ENCODE measurements at regions of chr3 and their contacts with region 1.

Region 1: DNA sequence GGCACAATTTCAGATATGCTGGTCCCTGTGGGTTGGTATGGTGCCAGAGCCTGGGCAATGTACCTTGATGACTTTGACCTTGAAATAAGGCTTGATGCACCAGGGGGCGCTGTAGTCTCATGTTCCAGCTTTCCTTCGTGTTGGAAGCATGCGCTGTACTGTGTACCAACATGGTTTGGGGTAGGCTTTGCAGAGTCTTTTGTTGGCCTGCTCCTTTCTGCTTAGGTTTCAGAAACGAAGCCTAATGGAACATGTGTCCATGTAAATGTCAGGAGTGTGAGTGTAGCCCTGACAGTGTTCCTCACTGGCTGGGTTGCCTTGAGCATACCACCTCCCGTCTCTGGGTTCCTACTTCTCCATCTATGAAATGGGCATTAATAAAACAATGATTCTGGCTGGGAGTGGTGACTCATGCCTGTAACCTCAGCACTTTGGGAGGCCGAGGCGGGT is 3.6 kb upstream of the CCR4 start:
- DNase-seq: peak; percentile 83 to 98 (median 92)
- ATAC-seq: peak; percentile 68
- H3K4me3 ChIP-seq: no peak overlapping the region
- H3K4me3 Mint-ChIP-seq: no peak overlapping the region
- H3K27ac ChIP-seq: no peak overlapping the region
- H3K27ac Mint-ChIP-seq: no peak overlapping the region
- H3K4me1 ChIP-seq: peaks cover 30% of the 10 kb centered on the region
- H3K4me1 Mint-ChIP-seq: peaks cover 47% of the 10 kb centered on the region
- H3K27me3 ChIP-seq: no peaks in the 10 kb centered on the region
- H3K27me3 Mint-ChIP-seq: no peaks in the 10 kb centered on the region
- CTCF ChIP-seq: peak; percentile 85

Region 2: DNA sequence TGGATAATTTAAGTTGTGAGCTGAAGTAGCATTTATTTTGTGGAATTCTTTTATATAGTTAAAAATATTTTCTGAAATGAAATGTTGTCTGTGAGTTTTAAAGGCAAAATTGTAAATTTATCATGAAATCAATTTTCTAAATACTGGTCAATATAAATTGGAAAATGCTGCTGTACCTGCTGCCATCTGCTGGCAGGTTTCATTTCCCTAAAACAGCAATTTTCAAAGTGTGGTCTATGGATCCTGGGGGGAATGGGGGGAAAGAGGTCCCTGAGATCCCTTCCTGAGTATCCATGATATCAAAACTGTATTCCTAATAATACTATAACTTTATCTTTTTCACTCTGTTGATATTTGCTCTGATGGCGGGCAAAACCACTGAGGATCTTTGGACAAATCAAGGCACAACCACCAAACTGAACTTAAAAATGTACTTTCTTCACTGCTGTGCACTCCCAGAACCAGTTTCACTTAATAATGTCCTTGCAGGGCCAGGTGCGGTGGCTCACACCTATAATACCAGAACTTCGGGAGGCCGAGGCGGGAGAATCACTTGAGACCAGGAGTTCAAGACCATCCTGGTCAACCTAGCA is 13.6 kb before region 1 on chr3:
- CTCF ChIA-PET with region 1: no interaction called
- POLR2A ChIA-PET with region 1: no interaction called
- intact Hi-C with region 1: no loop called
- DNase-seq: peak in 4 of 14 experiments; percentile 23 to 51 (median 42)
- ATAC-seq: no peak
- H3K4me3 ChIP-seq: no peak overlapping the region
- H3K4me3 Mint-ChIP-seq: no peak overlapping the region
- H3K27ac ChIP-seq: no peak overlapping the region
- H3K27ac Mint-ChIP-seq: no peak overlapping the region
- H3K4me1 ChIP-seq: no peaks in the 10 kb centered on the region
- H3K4me1 Mint-ChIP-seq: no peaks in the 10 kb centered on the region
- H3K27me3 ChIP-seq: peaks cover 0 to 4% of the 10 kb centered on the region in 2 experiments
- H3K27me3 Mint-ChIP-seq: peaks cover 16% of the 10 kb centered on the region
- CTCF ChIP-seq: peak; percentile 70

Region 3: GRCh38 chr3:32960404-32961170 is 12.8 kb after region 1 on chr3:
- CTCF ChIA-PET with region 1: interaction called, 7 read pairs
- POLR2A ChIA-PET with region 1: interaction called, 3 read pairs
- intact Hi-C with region 1: loop called in 1 of 2 experiments (anchors 1 kb)
- DNase-seq: peak in 3 of 14 experiments; percentile 60 to 71 (median 66)
- ATAC-seq: no peak
- H3K4me3 ChIP-seq: no peak overlapping the region
- H3K4me3 Mint-ChIP-seq: peak overlapping the region; percentile 65
- H3K27ac ChIP-seq: no peak overlapping the region
- H3K27ac Mint-ChIP-seq: peak overlapping the region; percentile 80
- H3K4me1 ChIP-seq: peaks cover 30% of the 10 kb centered on the region
- H3K4me1 Mint-ChIP-seq: peaks cover 35% of the 10 kb centered on the region
- H3K27me3 ChIP-seq: no peaks in the 10 kb centered on the region
- H3K27me3 Mint-ChIP-seq: no peaks in the 10 kb centered on the region
- CTCF ChIP-seq: no peak

Region 4: GRCh38 chr3:33023172-33024136 is 75.6 kb after region 1 on chr3:
- CTCF ChIA-PET with region 1: interaction called, 7 read pairs
- POLR2A ChIA-PET with region 1: no interaction called
- intact Hi-C with region 1: loop called in 1 of 2 experiments (anchors 2 kb)
- DNase-seq: peak in 3 of 14 experiments; percentile 63 to 70 (median 68)
- ATAC-seq: peak; percentile 93
- H3K4me3 ChIP-seq: no peak overlapping the region
- H3K4me3 Mint-ChIP-seq: peak overlapping the region; percentile 56
- H3K27ac ChIP-seq: peak overlapping the region in 1 of 2 donors; percentile 0
- H3K27ac Mint-ChIP-seq: peak overlapping the region; percentile 91
- H3K4me1 ChIP-seq: peaks cover 26% of the 10 kb centered on the region
- H3K4me1 Mint-ChIP-seq: peaks cover 63% of the 10 kb centered on the region
- H3K27me3 ChIP-seq: no peaks in the 10 kb centered on the region
- H3K27me3 Mint-ChIP-seq: no peaks in the 10 kb centered on the region
- CTCF ChIP-seq: peak; percentile 23

Region 5: DNA sequence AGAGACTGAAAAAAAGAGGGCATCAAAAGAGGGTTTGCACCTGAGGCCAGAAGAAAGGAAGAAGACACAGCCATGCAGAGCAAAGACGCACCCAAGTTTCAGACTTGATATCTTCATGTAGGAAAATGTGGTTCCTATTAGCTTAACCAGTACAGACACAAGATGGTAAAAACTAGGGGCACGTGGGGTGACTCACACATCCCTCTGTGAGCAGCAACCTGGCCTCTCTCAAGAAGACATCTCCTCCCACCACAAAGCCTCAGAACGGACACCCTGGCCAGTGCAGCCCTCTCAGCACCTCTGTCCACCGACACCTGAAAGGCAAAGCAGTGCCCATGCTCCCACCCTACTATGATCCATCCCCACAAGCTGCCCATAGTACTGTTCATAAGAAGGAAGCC is 115.8 kb after region 1 on chr3:
- CTCF ChIA-PET with region 1: interaction called, 5 read pairs
- POLR2A ChIA-PET with region 1: interaction called, 5 read pairs
- intact Hi-C with region 1: loop called in 1 of 2 experiments (anchors 2 kb)
- DNase-seq: peak in 11 of 14 experiments; percentile 37 to 70 (median 51)
- ATAC-seq: peak; percentile 41
- H3K4me3 ChIP-seq: no peak overlapping the region
- H3K4me3 Mint-ChIP-seq: peak overlapping the region; percentile 69
- H3K27ac ChIP-seq: peak overlapping the region; percentile 27 to 41
- H3K27ac Mint-ChIP-seq: peak overlapping the region; percentile 94
- H3K4me1 ChIP-seq: peaks cover 63% of the 10 kb centered on the region
- H3K4me1 Mint-ChIP-seq: peaks cover 68% of the 10 kb centered on the region
- H3K27me3 ChIP-seq: no peaks in the 10 kb centered on the region
- H3K27me3 Mint-ChIP-seq: no peaks in the 10 kb centered on the region
- CTCF ChIP-seq: no peak

Region 6: GRCh38 chr3:33131331-33132018 is 183.7 kb after region 1 on chr3:
- CTCF ChIA-PET with region 1: interaction called, 9 read pairs
- POLR2A ChIA-PET with region 1: no interaction called
- intact Hi-C with region 1: loop called in 1 of 2 experiments (anchors 5 kb)
- DNase-seq: peak in 9 of 14 experiments; percentile 5 to 67 (median 18)
- ATAC-seq: peak; percentile 67
- H3K4me3 ChIP-seq: no peak overlapping the region
- H3K4me3 Mint-ChIP-seq: no peak overlapping the region
- H3K27ac ChIP-seq: no peak overlapping the region
- H3K27ac Mint-ChIP-seq: no peak overlapping the region
- H3K4me1 ChIP-seq: no peaks in the 10 kb centered on the region
- H3K4me1 Mint-ChIP-seq: peaks cover 6% of the 10 kb centered on the region
- H3K27me3 ChIP-seq: no peaks in the 10 kb centered on the region
- H3K27me3 Mint-ChIP-seq: no peaks in the 10 kb centered on the region
- CTCF ChIP-seq: peak; percentile 90

Region 7: GRCh38 chr3:33787328-33788009 is 839.7 kb after region 1 on chr3:
- CTCF ChIA-PET with region 1: no interaction called
- POLR2A ChIA-PET with region 1: no interaction called
- intact Hi-C with region 1: loop called in 1 of 2 experiments (anchors 10 kb)
- DNase-seq: peak; percentile 25 to 83 (median 43)
- ATAC-seq: peak; percentile 89
- H3K4me3 ChIP-seq: no peak overlapping the region
- H3K4me3 Mint-ChIP-seq: no peak overlapping the region
- H3K27ac ChIP-seq: no peak overlapping the region
- H3K27ac Mint-ChIP-seq: no peak overlapping the region
- H3K4me1 ChIP-seq: peaks cover 6% of the 10 kb centered on the region
- H3K4me1 Mint-ChIP-seq: no peaks in the 10 kb centered on the region
- H3K27me3 ChIP-seq: no peaks in the 10 kb centered on the region
- H3K27me3 Mint-ChIP-seq: peaks cover 30% of the 10 kb centered on the region
- CTCF ChIP-seq: peak; percentile 87